Posterior vena cava (tissue), 2 donors: ENCODE measurements at regions of chrX and their contacts with region 1.

Region 1: DNA sequence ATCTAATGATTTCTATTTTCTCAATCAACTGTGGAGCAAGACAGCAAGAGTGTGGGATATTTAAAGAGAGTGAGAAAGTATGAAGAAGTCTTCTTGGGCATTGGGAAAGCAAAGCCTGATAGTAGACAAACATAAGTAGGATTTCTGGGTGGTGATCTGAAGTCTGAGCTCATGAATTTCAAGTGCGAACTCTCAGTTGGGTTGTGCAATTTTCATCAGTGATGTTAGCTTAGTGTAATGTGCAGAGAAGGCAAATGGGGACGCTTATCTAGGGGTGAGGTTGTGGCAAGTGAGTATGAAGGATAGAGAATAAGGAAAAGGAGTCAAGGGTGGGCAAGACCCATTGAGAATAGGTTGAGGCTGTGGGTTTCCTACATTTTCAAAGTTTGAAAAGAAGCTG is 23.7 kb downstream of the VGLL1 start:
- DNase-seq: no peak

Region 2: DNA sequence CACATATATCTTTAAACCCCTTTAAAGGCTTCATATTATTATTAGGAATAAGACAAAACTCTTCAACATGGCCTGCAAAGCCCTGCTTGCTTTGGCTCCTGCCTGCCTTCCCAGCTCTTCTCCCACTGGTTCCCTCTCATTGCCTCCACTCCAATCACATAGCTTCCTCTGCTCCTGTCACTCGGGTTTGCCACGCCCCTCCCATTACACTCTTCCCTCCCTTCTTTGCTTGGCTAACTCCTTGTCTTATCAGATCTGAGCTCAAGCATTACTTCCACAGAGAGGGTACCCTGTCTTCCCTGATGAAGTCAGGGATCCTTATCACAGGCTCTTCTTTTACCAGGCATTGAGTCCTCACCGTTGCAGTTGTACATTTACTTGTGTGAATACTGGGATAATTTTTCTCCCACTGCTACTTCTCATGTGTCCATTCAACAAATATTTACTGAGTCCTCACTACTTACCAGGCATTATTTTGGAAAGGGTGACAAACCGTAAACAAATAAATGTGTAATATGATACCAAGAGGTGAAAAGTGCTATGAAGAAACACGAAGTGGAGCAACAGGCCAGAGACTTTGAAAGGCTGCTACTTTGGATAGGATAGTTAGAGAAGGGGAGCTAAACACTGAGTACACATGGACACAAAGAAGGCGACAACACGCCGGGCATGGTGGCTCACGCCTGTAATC is 26.9 kb before region 1 on chrX:
- intact Hi-C with region 1: loop called in 1 of 2 experiments (anchors 1 kb)
- DNase-seq: no peak